ENCODE measurements at regions of chr5 and their contacts with region 1.

Region 1: GRCh38 chr5:105506692-105507277 is 1944.2 kb upstream of the NUDT12 start:
- DNase-seq: peak in 1 of 2 experiments; percentile 37
- H3K4me3 ChIP-seq: no peak overlapping the region
- H3K4me3 Mint-ChIP-seq: no peak overlapping the region
- H3K27ac Mint-ChIP-seq: no peak overlapping the region
- H3K4me1 ChIP-seq: no peaks in the 10 kb centered on the region
- H3K4me1 Mint-ChIP-seq: no peaks in the 10 kb centered on the region
- H3K27me3 ChIP-seq: no peaks in the 10 kb centered on the region
- H3K27me3 Mint-ChIP-seq: no peaks in the 10 kb centered on the region
- CTCF ChIP-seq: peak; percentile 44 to 73

Region 2: DNA sequence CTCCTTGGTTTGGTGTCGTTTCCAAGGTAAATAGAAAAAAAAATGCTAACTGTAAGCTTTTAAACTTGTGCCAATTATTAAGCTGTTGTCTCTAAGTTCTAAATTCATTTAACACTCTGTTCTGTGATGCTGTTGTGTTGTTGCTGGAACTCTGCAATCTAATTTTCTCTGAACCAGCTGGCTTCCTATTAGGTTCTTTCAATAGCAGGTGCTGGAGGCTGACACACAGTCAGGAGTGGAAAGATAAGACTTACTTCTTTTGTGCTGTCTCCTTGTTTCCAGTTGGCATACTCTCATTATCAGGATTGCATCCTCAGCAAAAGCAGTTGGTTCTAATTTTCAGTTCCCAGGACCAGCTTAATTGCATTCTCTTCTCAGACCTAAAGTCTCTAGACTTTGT is 691.6 kb before region 1 on chr5:
- CTCF ChIA-PET with region 1: no interaction called
- POLR2A ChIA-PET with region 1: no interaction called
- intact Hi-C with region 1: no loop called
- DNase-seq: no peak
- H3K4me3 ChIP-seq: no peak overlapping the region
- H3K4me3 Mint-ChIP-seq: no peak overlapping the region
- H3K27ac Mint-ChIP-seq: no peak overlapping the region
- H3K4me1 ChIP-seq: no peaks in the 10 kb centered on the region
- H3K4me1 Mint-ChIP-seq: no peaks in the 10 kb centered on the region
- H3K27me3 ChIP-seq: no peaks in the 10 kb centered on the region
- H3K27me3 Mint-ChIP-seq: no peaks in the 10 kb centered on the region
- CTCF ChIP-seq: no peak

Region 3: DNA sequence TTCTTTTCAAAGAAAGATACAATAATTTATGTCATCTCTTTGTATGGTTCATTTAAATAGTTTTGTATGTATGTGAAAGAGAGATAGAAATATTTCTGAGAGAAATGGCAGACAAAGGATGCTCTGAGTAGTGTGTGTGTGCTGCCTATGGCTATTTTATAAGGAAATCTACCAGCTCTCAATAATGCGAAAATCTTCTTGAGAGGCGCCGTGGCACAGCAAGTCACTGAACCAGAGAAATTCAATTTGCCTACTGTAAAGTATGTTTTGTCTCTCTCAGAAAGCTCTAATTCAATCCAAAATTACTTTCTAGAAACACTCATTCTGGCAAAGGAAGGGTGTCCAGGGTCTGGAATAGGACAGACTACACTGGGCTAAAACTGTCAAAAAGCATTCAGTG is 182.8 kb after region 1 on chr5:
- CTCF ChIA-PET with region 1: interaction called, 4 read pairs
- POLR2A ChIA-PET with region 1: no interaction called
- intact Hi-C with region 1: loop called (anchors 1 kb)
- DNase-seq: no peak
- H3K4me3 ChIP-seq: no peak overlapping the region
- H3K4me3 Mint-ChIP-seq: no peak overlapping the region
- H3K27ac Mint-ChIP-seq: no peak overlapping the region
- H3K4me1 ChIP-seq: peaks cover 3% of the 10 kb centered on the region; the same call in 1 of the 2 replicates
- H3K4me1 Mint-ChIP-seq: no peaks in the 10 kb centered on the region
- H3K27me3 ChIP-seq: no peaks in the 10 kb centered on the region
- H3K27me3 Mint-ChIP-seq: no peaks in the 10 kb centered on the region
- CTCF ChIP-seq: no peak

Region 4: DNA sequence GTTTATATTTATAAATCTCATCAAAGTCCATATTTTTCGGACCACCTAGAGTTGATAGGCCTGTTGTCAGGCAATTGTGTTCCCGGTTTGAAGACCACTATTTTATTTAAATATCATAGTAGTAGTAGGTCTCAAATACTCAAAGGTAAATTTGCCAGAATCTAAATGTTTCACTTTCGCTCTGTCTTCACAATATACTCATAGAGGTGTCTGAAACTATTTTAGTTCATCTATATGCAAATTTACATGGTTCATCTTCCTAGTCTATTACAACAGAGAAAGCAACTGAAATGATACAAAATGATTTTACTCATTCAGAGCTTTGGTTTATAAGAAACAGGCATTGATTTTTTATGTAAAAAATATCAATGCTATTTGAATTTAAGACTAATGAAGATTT is 266.5 kb after region 1 on chr5:
- CTCF ChIA-PET with region 1: no interaction called
- POLR2A ChIA-PET with region 1: no interaction called
- intact Hi-C with region 1: no loop called
- DNase-seq: no peak
- H3K4me3 ChIP-seq: no peak overlapping the region
- H3K4me3 Mint-ChIP-seq: no peak overlapping the region
- H3K27ac Mint-ChIP-seq: no peak overlapping the region
- H3K4me1 ChIP-seq: no peaks in the 10 kb centered on the region
- H3K4me1 Mint-ChIP-seq: no peaks in the 10 kb centered on the region
- H3K27me3 ChIP-seq: no peaks in the 10 kb centered on the region
- H3K27me3 Mint-ChIP-seq: peaks cover 2% of the 10 kb centered on the region
- CTCF ChIP-seq: no peak